ENCODE measurements at regions of chr6 and their contacts with region 1.

Region 1: DNA sequence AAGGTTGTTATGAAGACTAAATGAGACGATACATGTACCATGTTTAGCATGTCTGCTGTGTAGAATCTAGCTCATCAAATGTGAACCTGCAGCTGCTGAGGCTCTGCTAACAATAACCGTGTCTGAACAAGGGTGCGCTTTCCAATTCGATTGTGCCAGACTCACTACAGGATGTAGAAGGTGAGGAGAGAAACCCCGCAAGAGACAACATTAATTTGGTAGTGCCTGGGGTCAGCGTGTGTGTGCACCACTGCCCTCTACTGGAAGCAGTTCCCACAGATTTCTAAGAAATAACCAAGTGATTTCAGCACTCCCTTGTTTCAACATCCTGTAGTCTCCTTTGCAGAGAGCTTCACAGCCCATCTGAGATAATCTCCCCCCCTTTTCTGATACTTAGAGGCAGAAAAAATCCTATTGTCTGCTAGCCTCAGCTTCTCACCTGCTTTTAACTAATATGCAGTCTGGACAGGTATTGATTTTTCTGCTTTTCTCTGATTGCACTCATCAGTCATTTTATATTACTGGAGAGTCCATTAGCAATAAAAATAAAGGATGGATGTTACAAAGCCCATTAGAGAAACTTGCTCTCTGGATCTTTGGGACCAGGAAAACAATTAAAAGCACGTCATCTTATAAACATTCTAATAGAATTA is 96.7 kb upstream of the BACH2 start:
- DNase-seq: peak; percentile 71
- H3K4me3 ChIP-seq: no peak overlapping the region
- H3K27ac ChIP-seq: no peak overlapping the region
- H3K4me1 ChIP-seq: no peaks in the 10 kb centered on the region
- H3K27me3 ChIP-seq: no peaks in the 10 kb centered on the region
- CTCF ChIP-seq: peak; percentile 45 to 79 (median 59)
- EP300 ChIP-seq: no peak
- POLR2A ChIP-seq: no peak

Region 2: DNA sequence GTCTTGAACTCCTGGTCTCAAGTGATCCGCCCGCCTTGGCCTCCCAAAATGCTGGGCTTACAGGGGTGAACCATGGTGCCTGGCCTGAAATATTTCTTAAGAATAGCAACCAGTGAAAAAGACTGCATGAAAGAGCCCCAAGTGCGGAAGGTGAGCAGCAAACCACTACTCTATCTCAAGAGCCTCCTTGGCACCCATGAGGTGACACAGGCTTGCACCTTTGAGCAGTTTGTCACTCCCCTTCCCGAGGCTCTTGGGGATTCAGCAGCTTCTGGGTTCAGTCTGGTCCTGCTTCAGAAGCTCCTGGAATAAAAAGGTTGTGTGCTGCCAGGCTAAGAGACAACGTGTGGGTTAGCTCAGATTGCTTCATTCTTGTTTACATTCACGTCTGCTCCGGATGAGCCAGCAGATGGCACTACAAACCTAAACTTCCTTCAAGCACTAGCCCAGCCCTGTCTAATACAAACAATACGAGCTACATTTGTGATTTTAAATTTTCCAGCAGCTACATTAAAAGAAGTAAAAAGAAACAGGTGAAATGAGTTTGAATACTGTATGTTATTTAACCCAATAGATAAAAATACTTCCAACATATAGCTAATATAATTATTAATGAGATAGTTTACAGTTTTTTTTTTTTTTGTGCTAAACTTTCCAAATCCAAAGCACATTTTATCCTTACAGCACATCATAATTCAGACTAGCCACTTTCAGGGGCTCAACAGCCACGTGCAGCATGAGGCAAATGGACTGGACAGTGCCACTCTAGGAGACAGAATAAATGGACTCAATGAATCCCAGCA is 452.9 kb before region 1 on chr6:
- intact Hi-C with region 1: loop called (anchors 2 kb)
- DNase-seq: peak; percentile 82
- H3K4me3 ChIP-seq: no peak overlapping the region
- H3K27ac ChIP-seq: no peak overlapping the region
- H3K4me1 ChIP-seq: peaks cover 0 to 9% (median 2%) of the 10 kb centered on the region in 4 donors
- H3K27me3 ChIP-seq: no peaks in the 10 kb centered on the region
- CTCF ChIP-seq: peak; percentile 13 to 59 (median 54)
- EP300 ChIP-seq: no peak
- POLR2A ChIP-seq: no peak

Region 3: DNA sequence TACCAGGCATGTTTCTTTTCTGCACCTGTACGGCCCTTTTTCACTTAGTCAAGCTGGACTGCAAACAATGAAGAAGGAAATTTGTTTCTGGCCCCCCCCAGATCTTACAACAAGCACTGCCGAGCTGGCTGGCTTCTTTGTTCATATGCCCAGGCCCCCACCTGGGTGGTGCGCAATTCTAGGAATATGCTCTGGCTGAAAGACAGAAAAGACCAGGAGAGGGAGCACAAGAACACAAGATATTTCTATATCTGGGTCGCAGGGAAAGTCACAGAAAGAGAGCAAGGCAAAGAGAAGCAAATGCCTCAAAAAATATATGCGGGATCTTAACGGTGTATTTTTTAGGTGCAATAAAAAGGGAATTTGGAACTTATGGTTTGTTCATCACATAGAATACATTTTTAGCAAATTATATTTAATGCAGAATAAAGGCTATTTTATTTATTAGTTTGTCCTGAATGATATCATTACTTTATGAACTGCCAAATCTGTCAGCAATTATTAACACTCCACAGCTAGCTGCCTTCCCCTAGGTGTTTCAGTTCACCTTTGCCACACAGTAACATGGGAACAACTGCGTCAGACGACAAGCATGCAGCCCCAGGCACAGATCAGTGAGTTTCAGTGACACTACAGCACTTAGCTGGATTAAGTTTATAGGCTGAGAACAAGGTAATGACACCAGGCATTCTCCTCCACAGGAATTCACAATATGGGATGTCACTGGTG is 422.6 kb before region 1 on chr6:
- intact Hi-C with region 1: loop called (anchors 1 kb)
- DNase-seq: no peak
- H3K4me3 ChIP-seq: no peak overlapping the region
- H3K27ac ChIP-seq: no peak overlapping the region
- H3K4me1 ChIP-seq: peaks cover 0 to 3% (median 0%) of the 10 kb centered on the region in 4 donors
- H3K27me3 ChIP-seq: no peaks in the 10 kb centered on the region
- CTCF ChIP-seq: peak; percentile 17 to 56 (median 56)
- EP300 ChIP-seq: no peak
- POLR2A ChIP-seq: no peak

Region 4: DNA sequence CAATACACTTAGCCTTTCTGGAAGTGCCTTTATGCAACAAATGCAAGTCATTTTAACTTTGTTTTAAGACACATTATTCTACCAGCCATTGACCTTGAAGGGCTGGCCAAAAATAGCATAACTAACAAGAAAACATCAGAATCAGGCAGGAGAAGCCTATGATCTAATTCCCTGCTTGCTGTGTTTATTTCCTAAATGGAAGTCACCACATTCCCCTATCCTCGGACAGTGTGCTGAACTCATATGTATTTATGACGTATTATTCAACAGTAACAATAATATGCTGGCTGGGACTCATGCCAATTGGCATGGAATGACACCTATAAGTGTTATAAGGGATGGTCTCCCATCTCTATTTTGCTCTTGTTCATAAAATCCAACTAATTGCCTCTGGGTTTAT is 52.8 kb after region 1 on chr6:
- intact Hi-C with region 1: no loop called
- DNase-seq: no peak
- H3K4me3 ChIP-seq: no peak overlapping the region
- H3K27ac ChIP-seq: no peak overlapping the region
- H3K4me1 ChIP-seq: no peaks in the 10 kb centered on the region
- H3K27me3 ChIP-seq: no peaks in the 10 kb centered on the region
- CTCF ChIP-seq: no peak
- EP300 ChIP-seq: no peak
- POLR2A ChIP-seq: no peak

Measured in sigmoid colon (tissue), 7 donors.